PC-3 (cell line): ENCODE measurements at regions of chr3 and their contacts with region 1.

Region 1: DNA sequence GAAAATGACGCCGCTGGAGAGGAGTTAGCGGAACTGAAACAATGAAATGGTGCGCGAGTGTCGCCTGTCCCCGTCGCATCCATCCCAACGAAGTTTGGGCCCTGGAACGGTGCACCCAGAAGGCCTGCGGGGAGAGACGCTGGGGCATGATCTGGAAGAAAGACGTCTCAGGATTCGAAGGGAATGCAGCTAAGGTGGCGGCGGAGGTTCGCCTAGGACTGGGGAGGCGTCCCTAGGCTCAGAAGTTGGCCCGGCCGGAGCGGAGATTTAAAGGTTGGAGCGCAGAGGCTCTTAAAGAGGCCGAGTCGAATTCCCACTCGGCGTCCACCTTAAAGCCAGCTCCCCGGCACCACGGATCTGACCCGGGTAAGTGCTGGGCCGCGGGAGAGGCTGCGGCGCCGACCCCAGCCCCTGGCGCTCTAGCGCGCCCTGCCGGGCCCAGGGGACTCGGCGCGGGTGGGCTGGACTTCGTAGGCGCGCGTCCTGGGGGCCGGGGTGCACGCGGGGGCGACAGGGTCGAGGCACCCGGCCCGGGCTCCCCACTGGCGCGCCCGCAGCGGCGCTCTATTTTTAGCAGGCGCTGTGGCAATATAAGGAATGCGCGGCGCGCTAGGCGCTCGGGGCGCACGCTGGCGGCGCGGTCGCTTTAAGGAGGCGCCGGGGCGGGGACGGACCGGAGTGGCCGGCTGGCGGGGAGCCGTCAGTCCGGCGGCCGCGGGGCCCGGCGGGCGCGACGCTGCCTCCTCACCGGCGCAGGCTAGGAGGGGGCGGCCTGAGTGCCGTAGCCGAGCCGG is at the start of gene MRAS:
- DNase-seq: peak; percentile 57
- ATAC-seq: peak; percentile 78
- H3K4me3 ChIP-seq: peak within 1 kb of the TSS; percentile 84
- H3K27ac ChIP-seq: no peak within 1 kb of the TSS
- H3K4me1 ChIP-seq: no peaks in the 10 kb centered on the region
- H3K27me3 ChIP-seq: no peaks in the 10 kb centered on the region
- CTCF ChIP-seq: peak; percentile 39; the same call in 1 of the 2 replicates
- total RNA-seq, gene MRAS: 2.8 and 5.3 TPM in 2 replicates

Region 2: DNA sequence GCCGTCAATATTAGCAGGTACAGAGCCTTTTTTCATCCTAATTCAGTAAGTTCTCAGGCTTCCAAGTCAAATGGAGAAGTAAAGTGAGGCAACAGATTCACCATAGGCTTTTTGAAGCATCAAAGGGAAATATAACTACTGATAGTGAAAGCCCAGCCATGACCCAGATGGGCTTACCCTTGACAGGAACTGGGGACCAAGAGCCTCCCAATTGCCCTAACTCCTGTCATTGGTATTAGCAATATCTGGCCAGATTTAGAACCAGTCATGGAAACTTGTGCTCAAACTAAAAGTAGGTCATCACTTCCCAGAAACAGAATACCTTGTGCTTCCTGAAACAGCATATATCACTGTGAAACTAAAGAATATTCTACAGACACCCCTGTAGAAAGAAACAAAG is 51.5 kb before region 1 on chr3:
- CTCF ChIA-PET with region 1: no interaction called
- POLR2A ChIA-PET with region 1: no interaction called
- intact Hi-C with region 1: no loop called
- DNase-seq: no peak
- ATAC-seq: no peak
- H3K4me3 ChIP-seq: no peak overlapping the region
- H3K27ac ChIP-seq: no peak overlapping the region
- H3K4me1 ChIP-seq: no peaks in the 10 kb centered on the region
- H3K27me3 ChIP-seq: no peaks in the 10 kb centered on the region
- CTCF ChIP-seq: no peak

Region 3: GRCh38 chr3:138389841-138390586 is 41.9 kb after region 1 on chr3:
- CTCF ChIA-PET with region 1: no interaction called
- POLR2A ChIA-PET with region 1: no interaction called
- intact Hi-C with region 1: loop called (anchors 5 kb)
- DNase-seq: peak; percentile 83
- ATAC-seq: peak; percentile 93
- H3K4me3 ChIP-seq: no peak overlapping the region
- H3K27ac ChIP-seq: peak overlapping the region; percentile 41
- H3K4me1 ChIP-seq: peaks cover 17% of the 10 kb centered on the region
- H3K27me3 ChIP-seq: no peaks in the 10 kb centered on the region
- CTCF ChIP-seq: no peak

Region 4: DNA sequence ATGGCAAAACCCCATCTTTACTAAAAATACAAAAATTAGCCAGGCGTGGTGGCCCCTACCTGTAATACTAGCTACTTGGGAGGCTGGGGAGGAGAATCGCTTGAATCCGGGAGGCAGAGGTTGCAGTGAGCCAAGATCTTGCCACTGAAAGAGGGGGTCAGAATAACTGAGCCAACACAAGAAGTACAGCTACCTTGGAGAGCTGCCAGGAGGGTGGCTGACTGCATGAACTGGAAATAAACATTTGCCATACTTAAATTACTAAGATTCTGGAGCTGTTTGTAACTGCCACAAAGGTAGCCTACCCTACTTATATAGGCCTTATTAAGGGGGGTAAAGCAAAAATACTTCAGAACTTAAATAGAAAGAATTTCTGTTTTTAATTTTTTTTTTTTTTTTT is 502.0 kb after region 1 on chr3:
- CTCF ChIA-PET with region 1: no interaction called
- POLR2A ChIA-PET with region 1: no interaction called
- intact Hi-C with region 1: no loop called
- DNase-seq: no peak
- ATAC-seq: no peak
- H3K4me3 ChIP-seq: no peak overlapping the region
- H3K27ac ChIP-seq: no peak overlapping the region
- H3K4me1 ChIP-seq: no peaks in the 10 kb centered on the region
- H3K27me3 ChIP-seq: no peaks in the 10 kb centered on the region
- CTCF ChIP-seq: no peak